Activated CD8-positive, alpha-beta T cell treated with anti-CD3 and anti-CD28 coated beads for 36 hours (primary cell): ENCODE measurements at regions of chr3 and their contacts with region 1.

Region 1: GRCh38 chr3:48465531-48466378 is 19.2 kb downstream of the ATRIP start:
- DNase-seq: peak; percentile 88
- ATAC-seq: peak; percentile 90
- H3K4me3 Mint-ChIP-seq: peak overlapping the region; percentile 87
- H3K27ac Mint-ChIP-seq: peak overlapping the region; percentile 96
- H3K4me1 Mint-ChIP-seq: peaks cover 40% of the 10 kb centered on the region
- H3K27me3 Mint-ChIP-seq: no peaks in the 10 kb centered on the region
- CTCF ChIP-seq: no peak

Region 2: GRCh38 chr3:48318783-48319468 is 146.8 kb before region 1 on chr3:
- CTCF ChIA-PET with region 1: no interaction called
- POLR2A ChIA-PET with region 1: no interaction called
- intact Hi-C with region 1: no loop called
- DNase-seq: no peak
- ATAC-seq: no peak
- H3K4me3 Mint-ChIP-seq: no peak overlapping the region
- H3K27ac Mint-ChIP-seq: no peak overlapping the region
- H3K4me1 Mint-ChIP-seq: peaks cover 11% of the 10 kb centered on the region
- H3K27me3 Mint-ChIP-seq: no peaks in the 10 kb centered on the region
- CTCF ChIP-seq: no peak

Region 3: DNA sequence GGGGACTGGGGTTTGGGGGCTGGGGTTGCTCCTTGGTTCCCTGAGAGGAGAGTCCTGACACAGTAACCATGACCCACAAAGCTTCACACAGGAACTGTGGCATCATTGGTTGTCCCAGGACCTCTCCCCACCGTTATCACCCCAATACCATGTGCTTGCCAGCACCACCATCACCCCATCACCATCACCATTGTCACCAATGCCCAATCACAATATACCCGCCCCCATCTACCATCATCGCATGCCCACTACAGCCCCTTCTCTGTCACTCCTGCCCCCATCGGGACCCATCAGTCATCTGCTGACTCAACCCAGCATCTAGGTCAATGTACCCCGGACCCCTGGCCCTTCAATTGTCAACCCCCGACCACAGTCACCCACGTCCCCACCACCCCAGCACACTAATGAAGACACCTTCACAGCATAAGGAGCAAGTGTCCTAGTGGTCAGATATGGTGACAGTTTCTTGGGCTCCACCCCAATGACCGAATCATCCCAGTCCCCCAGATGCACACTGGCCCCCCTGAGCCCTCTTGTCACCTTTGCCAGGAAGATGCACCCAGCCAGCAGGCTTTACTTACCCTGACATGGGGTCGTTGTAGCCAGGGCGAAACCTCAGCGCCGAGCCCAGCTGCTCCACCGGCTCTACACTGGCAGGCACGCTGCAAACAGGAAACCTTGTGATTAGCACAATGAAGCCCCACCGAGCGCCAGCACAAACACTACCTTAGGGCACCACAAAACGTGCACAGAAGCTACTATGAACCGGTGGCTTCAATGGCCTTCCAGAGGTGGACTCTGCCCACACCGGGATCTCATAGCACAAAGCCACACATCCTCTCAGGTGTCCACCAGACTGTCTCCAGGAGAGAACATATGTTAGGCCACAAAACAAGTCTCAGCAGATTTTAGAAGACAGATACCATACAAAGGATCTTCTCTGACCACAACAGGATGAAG is 13.1 kb after region 1 on chr3:
- CTCF ChIA-PET with region 1: no interaction called
- POLR2A ChIA-PET with region 1: interaction called, 18 read pairs
- intact Hi-C with region 1: no loop called
- DNase-seq: peak; percentile 80
- ATAC-seq: peak; percentile 79
- H3K4me3 Mint-ChIP-seq: peak overlapping the region; percentile 68
- H3K27ac Mint-ChIP-seq: peak overlapping the region; percentile 98
- H3K4me1 Mint-ChIP-seq: peaks cover 35% of the 10 kb centered on the region
- H3K27me3 Mint-ChIP-seq: no peaks in the 10 kb centered on the region
- CTCF ChIP-seq: no peak